ENCODE measurements at regions of chr13 and their contacts with region 1.

Region 1: DNA sequence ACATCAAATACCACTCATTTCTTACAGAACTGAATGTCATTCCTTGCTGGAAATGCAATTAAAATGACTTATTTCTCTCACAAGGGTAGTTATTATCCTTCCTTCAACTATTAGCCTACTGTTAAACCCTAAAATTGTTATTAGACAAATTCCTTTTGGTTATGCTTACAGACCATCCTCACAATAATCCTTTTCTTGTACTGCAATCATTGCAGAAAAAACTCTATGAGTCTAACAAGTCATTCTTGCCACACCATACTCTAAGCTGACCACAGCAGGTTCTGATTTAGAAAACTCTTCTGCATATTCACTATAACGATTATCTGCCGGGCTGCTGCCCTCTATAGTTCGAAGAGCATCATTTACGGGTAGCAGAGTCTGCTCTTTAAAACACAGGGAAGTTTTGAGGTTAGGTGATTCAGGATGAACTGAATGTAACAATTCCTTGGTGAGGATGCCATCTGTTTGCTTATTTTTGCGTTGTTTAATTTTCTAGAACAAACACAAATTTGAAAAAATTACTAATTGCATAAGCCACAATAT is 38.2 kb downstream of the MTMR6 start:
- DNase-seq: peak in 6 of 10 donors; percentile 49 to 75 (median 58)
- H3K4me3 ChIP-seq: peak overlapping the region in 3 of 59 donors; percentile 8 to 18 (median 12)
- H3K27ac ChIP-seq: peak overlapping the region in 58 of 59 donors; percentile 6 to 90 (median 72)
- H3K27me3 ChIP-seq: no peaks in the 10 kb centered on the region
- CTCF ChIP-seq: peak; percentile 41 to 89 (median 71)

Region 2: DNA sequence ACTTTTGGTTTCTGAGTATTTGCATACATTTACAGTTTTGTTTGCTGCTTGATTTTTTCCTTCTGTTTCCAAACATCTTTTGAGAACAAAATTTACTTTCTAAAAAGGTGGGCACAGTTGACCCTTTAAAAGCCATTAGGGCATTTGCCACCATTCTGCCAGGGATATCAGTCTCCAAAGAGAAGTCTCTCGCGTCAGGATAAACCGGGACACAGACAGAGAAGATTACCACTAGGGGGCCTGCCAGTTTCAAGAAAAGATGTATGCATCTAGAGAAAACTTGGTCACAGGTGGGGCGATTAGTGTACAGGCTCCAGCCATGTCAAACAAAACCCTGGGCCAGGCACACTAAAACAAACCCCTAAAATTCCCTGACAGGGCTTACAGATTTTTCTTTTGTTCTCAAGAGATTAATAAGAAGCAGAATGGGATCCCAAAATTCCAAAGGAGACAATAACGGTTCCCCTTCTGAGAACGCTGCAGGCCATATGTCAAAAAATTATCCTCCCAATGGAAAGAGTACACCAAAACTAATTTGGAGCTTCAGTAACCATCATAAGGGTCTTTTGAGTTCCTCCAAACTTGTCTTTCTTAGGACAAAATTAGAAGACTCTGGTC is 163.8 kb before region 1 on chr13:
- intact Hi-C with region 1: loop called in 1 of 2 experiments (anchors 10 kb)
- DNase-seq: peak in 7 of 10 donors; percentile 41 to 82 (median 66)
- H3K4me3 ChIP-seq: peak overlapping the region in 21 of 59 donors; percentile 3 to 42 (median 18)
- H3K27ac ChIP-seq: peak overlapping the region in 56 of 59 donors; percentile 9 to 89 (median 71)
- H3K27me3 ChIP-seq: no peaks in the 10 kb centered on the region
- CTCF ChIP-seq: peak; percentile 59 to 89 (median 78)

Region 3: GRCh38 chr13:25192936-25193335 is 56.1 kb before region 1 on chr13:
- intact Hi-C with region 1: loop called in 1 of 2 experiments (anchors 10 kb)
- DNase-seq: peak in 9 of 10 donors; percentile 75 to 96 (median 90)
- H3K4me3 ChIP-seq: peak overlapping the region in 16 of 59 donors; percentile 1 to 45 (median 27)
- H3K27ac ChIP-seq: peak overlapping the region; percentile 80 to 100 (median 98)
- H3K27me3 ChIP-seq: peaks cover 0 to 8% (median 0%) of the 10 kb centered on the region in 45 donors
- CTCF ChIP-seq: peak in 8 of 56 donors; percentile 3 to 28 (median 13)